Colonic mucosa (tissue), 4 donors: ENCODE measurements at regions of chr9 and their contacts with region 1.

Region 1: DNA sequence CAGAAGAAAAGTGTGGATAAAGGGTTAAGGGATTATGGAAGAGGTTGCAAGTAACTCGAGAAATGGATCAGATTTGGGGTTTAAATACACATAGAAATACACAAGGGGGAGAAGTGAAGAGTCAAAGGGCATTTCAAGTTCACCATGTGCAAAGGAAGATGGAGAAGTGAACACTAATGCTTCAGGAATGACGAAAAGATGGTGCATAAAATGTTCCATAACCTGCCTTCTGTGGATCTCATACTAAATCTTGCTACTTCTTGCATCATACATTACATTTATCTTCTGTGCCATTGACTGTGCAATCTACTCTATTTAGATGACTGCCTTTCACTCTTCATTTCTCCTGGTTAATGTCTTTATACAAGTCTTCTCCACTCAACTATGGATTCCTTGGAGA is 5.7 kb upstream of the SMC2 start:
- DNase-seq: no peak
- H3K4me3 ChIP-seq: no peak overlapping the region
- H3K27ac ChIP-seq: no peak overlapping the region
- H3K4me1 ChIP-seq: no peaks in the 10 kb centered on the region
- H3K27me3 ChIP-seq: no peaks in the 10 kb centered on the region
- CTCF ChIP-seq: no peak

Region 2: DNA sequence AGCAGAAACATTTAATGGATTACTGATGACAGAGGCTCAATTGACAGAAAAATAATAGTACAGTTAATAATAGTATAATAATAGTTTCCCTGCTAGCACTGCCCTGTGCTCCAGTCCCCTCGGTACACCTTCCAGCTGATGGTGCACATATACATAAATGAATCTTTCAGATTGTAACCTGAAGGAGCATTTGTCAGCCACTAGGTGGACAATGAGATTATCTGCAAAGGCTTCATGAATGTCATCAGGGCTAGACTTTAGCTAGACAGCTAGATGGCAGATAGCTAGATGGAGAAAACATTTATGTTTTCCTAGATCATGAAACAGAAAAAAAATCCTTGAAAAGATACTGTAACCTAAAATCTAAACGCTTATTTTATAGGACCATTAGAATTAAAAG is 298.7 kb before region 1 on chr9:
- intact Hi-C with region 1: loop called (anchors 10 kb)
- DNase-seq: no peak
- H3K4me3 ChIP-seq: no peak overlapping the region
- H3K27ac ChIP-seq: no peak overlapping the region
- H3K4me1 ChIP-seq: no peaks in the 10 kb centered on the region
- H3K27me3 ChIP-seq: no peaks in the 10 kb centered on the region
- CTCF ChIP-seq: peak; percentile 35

Region 3: GRCh38 chr9:103894184-103894583 is 194.2 kb before region 1 on chr9:
- intact Hi-C with region 1: no loop called
- DNase-seq: no peak
- H3K4me3 ChIP-seq: no peak overlapping the region
- H3K27ac ChIP-seq: no peak overlapping the region
- H3K4me1 ChIP-seq: no peaks in the 10 kb centered on the region
- H3K27me3 ChIP-seq: no peaks in the 10 kb centered on the region
- CTCF ChIP-seq: no peak